K562 (cell line): ENCODE measurements at regions of chr7 and their contacts with region 1.

Region 1: DNA sequence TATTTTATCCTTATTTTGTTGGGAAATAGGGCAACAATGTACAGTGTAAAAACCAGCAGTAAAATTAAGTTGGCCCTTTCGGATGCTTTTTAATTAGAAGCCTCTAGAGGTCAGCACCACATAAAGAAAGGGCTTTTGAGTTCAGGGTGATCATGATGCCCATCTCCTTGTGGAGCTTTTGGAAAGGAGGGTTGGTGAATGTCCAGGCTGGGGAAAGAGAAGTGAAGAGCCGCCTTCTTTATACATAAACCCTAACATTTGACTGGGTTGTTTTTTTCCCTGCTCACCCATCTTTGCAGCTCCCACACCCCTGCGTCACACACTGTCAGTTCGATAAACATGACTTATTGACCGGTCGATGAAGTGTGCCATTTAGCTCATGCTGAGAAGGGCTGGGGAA is 29.8 kb downstream of the MTURN start:
- DNase-seq: peak; percentile 37 to 59 (median 50)
- ATAC-seq: peak; percentile 70
- H3K4me3 ChIP-seq: no peak overlapping the region
- H3K27ac ChIP-seq: no peak overlapping the region
- H3K4me1 ChIP-seq: peaks cover 12 to 39% of the 10 kb centered on the region in 2 experiments
- H3K27me3 ChIP-seq: peaks cover 26 to 34% of the 10 kb centered on the region in 2 experiments
- CTCF ChIP-seq: peak; percentile 54 to 81 (median 63); a peak in 4 of 6 replicates
- EP300 ChIP-seq: no peak
- POLR2A ChIP-seq: no peak
- RAD21 ChIP-seq: peak; percentile 75 to 79

Region 2: DNA sequence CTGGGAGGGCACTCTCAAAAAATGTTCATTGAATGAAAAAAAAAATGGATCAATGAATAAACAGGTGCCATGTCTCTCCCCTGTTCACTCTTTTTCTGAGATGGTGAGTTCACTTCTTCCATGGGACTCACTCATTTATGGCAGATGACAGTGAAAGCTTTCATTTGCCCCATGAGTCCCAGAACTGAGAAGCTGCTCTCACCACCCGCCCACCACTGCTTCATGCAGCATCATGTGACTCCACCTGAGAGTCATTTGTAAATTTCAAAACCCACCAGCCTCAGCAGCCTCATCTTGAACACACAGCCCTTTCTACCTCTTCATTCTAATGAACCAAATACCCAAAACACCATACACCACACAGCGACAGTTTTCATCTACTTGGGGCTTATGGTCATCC is 239.9 kb before region 1 on chr7:
- CTCF ChIA-PET with region 1: no interaction called
- POLR2A ChIA-PET with region 1: no interaction called
- in situ Hi-C with region 1: no loop called
- intact Hi-C with region 1: no loop called
- DNase-seq: no peak
- ATAC-seq: no peak
- H3K4me3 ChIP-seq: no peak overlapping the region
- H3K27ac ChIP-seq: no peak overlapping the region
- H3K4me1 ChIP-seq: peaks cover 2 to 7% of the 10 kb centered on the region in 2 experiments; a peak in 3 of 5 replicates
- H3K27me3 ChIP-seq: peaks cover 4 to 28% of the 10 kb centered on the region in 2 experiments; a peak in 2 of 5 replicates
- CTCF ChIP-seq: no peak
- EP300 ChIP-seq: no peak
- POLR2A ChIP-seq: no peak
- RAD21 ChIP-seq: no peak

Region 3: GRCh38 chr7:30268586-30268985 is 104.0 kb after region 1 on chr7:
- CTCF ChIA-PET with region 1: no interaction called
- POLR2A ChIA-PET with region 1: interaction called, 3 read pairs
- in situ Hi-C with region 1: no loop called
- intact Hi-C with region 1: loop called (anchors 5 kb)
- DNase-seq: no peak
- ATAC-seq: no peak
- H3K4me3 ChIP-seq: no peak overlapping the region
- H3K27ac ChIP-seq: no peak overlapping the region
- H3K4me1 ChIP-seq: peaks cover 0 to 9% of the 10 kb centered on the region in 2 experiments; a peak in 2 of 5 replicates
- H3K27me3 ChIP-seq: no peaks in the 10 kb centered on the region
- CTCF ChIP-seq: no peak
- EP300 ChIP-seq: no peak
- POLR2A ChIP-seq: no peak
- RAD21 ChIP-seq: no peak

Region 4: GRCh38 chr7:30348083-30348560 is 183.6 kb after region 1 on chr7:
- CTCF ChIA-PET with region 1: no interaction called
- POLR2A ChIA-PET with region 1: no interaction called
- in situ Hi-C with region 1: no loop called
- intact Hi-C with region 1: loop called (anchors 10 kb)
- DNase-seq: peak; percentile 10 to 77 (median 38)
- ATAC-seq: peak; percentile 84
- H3K4me3 ChIP-seq: no peak overlapping the region; the same call in 1 of the 2 replicates
- H3K27ac ChIP-seq: peak overlapping the region; percentile 80
- H3K4me1 ChIP-seq: peaks cover 0 to 48% of the 10 kb centered on the region in 2 experiments; a peak in 3 of 5 replicates
- H3K27me3 ChIP-seq: no peaks in the 10 kb centered on the region
- CTCF ChIP-seq: no peak
- EP300 ChIP-seq: peak; percentile 62
- POLR2A ChIP-seq: no peak
- RAD21 ChIP-seq: 0 out of 4 replicates have a peak, but pooled peaks of 1 of the 2 experiments have one; percentile 11

Region 5: GRCh38 chr7:30412810-30413504 is 248.4 kb after region 1 on chr7:
- CTCF ChIA-PET with region 1: interaction called, 4 read pairs
- POLR2A ChIA-PET with region 1: no interaction called
- in situ Hi-C with region 1: loop called (anchors 5 kb)
- intact Hi-C with region 1: loop called (anchors 2 kb)
- DNase-seq: peak; percentile 36 to 77 (median 54)
- ATAC-seq: peak; percentile 94
- H3K4me3 ChIP-seq: no peak overlapping the region
- H3K27ac ChIP-seq: no peak overlapping the region
- H3K4me1 ChIP-seq: no peaks in the 10 kb centered on the region; a peak in 1 of 5 replicates
- H3K27me3 ChIP-seq: no peaks in the 10 kb centered on the region
- CTCF ChIP-seq: peak; percentile 55 to 75 (median 75)
- EP300 ChIP-seq: no peak
- POLR2A ChIP-seq: no peak
- RAD21 ChIP-seq: peak; percentile 85 to 92

Region 6: GRCh38 chr7:30731619-30732018 is 567.1 kb after region 1 on chr7:
- CTCF ChIA-PET with region 1: no interaction called
- POLR2A ChIA-PET with region 1: no interaction called
- in situ Hi-C with region 1: loop called (anchors 10 kb)
- intact Hi-C with region 1: no loop called
- DNase-seq: no peak
- ATAC-seq: peak; percentile 15; the same call in 1 of the 3 replicates
- H3K4me3 ChIP-seq: no peak overlapping the region
- H3K27ac ChIP-seq: no peak overlapping the region
- H3K4me1 ChIP-seq: peaks cover 4% of the 10 kb centered on the region in 2 experiments; a peak in 3 of 5 replicates
- H3K27me3 ChIP-seq: peaks cover 53 to 73% of the 10 kb centered on the region in 2 experiments
- CTCF ChIP-seq: no peak
- EP300 ChIP-seq: no peak
- POLR2A ChIP-seq: no peak
- RAD21 ChIP-seq: no peak